ENCODE measurements at regions of chr6 and their contacts with region 1.

Region 1: GRCh38 chr6:90393232-90393884 is 96.7 kb upstream of the BACH2 start:
- DNase-seq: peak; percentile 92
- H3K4me3 Mint-ChIP-seq: no peak overlapping the region
- H3K27ac Mint-ChIP-seq: peak overlapping the region; percentile 70
- H3K4me1 Mint-ChIP-seq: peaks cover 78% of the 10 kb centered on the region
- H3K27me3 Mint-ChIP-seq: no peaks in the 10 kb centered on the region

Region 2: DNA sequence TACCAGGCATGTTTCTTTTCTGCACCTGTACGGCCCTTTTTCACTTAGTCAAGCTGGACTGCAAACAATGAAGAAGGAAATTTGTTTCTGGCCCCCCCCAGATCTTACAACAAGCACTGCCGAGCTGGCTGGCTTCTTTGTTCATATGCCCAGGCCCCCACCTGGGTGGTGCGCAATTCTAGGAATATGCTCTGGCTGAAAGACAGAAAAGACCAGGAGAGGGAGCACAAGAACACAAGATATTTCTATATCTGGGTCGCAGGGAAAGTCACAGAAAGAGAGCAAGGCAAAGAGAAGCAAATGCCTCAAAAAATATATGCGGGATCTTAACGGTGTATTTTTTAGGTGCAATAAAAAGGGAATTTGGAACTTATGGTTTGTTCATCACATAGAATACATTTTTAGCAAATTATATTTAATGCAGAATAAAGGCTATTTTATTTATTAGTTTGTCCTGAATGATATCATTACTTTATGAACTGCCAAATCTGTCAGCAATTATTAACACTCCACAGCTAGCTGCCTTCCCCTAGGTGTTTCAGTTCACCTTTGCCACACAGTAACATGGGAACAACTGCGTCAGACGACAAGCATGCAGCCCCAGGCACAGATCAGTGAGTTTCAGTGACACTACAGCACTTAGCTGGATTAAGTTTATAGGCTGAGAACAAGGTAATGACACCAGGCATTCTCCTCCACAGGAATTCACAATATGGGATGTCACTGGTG is 422.6 kb before region 1 on chr6:
- CTCF ChIA-PET with region 1: no interaction called
- intact Hi-C with region 1: loop called (anchors 1 kb)
- DNase-seq: peak; percentile 36
- H3K4me3 Mint-ChIP-seq: no peak overlapping the region
- H3K27ac Mint-ChIP-seq: no peak overlapping the region
- H3K4me1 Mint-ChIP-seq: peaks cover 54% of the 10 kb centered on the region
- H3K27me3 Mint-ChIP-seq: no peaks in the 10 kb centered on the region

Region 3: DNA sequence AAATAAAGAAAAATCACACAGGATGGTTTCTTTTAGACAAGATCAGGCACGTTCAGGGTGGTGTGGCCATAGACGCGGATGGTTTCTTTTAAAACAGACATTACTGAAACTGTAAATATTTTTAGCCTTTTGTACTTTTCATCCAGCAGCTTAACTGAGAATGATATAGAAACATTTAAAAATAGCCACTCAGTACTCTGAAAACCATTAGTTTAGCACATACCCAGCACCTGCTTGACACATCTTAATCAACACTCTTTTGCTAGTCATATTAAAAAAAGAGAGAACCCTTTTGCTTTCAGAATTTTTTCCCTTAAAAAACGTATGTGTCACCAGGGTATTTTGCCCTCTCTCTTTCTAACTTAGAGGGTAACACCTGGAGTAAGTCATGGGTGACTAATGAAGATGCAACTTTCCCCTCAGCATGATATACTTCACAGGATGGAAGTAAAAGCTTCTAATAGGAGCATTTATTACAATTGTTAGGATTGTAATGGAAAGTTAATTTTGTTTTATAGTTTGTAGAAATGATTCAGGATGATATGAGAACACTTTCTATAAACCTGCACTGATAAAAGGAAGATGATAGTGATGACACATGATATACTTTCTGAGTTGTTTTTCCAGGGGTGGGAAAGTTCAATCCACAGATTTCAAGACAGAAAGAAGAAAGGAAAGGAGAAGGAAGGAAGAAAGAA is 141.9 kb before region 1 on chr6:
- CTCF ChIA-PET with region 1: interaction called, 4 read pairs
- intact Hi-C with region 1: loop called (anchors 1 kb)
- DNase-seq: no peak
- H3K4me3 Mint-ChIP-seq: peak overlapping the region; percentile 8
- H3K27ac Mint-ChIP-seq: peak overlapping the region; percentile 98
- H3K4me1 Mint-ChIP-seq: peaks cover 90% of the 10 kb centered on the region
- H3K27me3 Mint-ChIP-seq: no peaks in the 10 kb centered on the region

Region 4: GRCh38 chr6:90263633-90264032 is 129.7 kb before region 1 on chr6:
- CTCF ChIA-PET with region 1: no interaction called
- intact Hi-C with region 1: no loop called
- DNase-seq: no peak
- H3K4me3 Mint-ChIP-seq: no peak overlapping the region
- H3K27ac Mint-ChIP-seq: peak overlapping the region; percentile 96
- H3K4me1 Mint-ChIP-seq: peaks cover 96% of the 10 kb centered on the region
- H3K27me3 Mint-ChIP-seq: no peaks in the 10 kb centered on the region

Region 5: GRCh38 chr6:90326404-90327057 is 66.8 kb before region 1 on chr6:
- CTCF ChIA-PET with region 1: interaction called, 4 read pairs
- intact Hi-C with region 1: loop called (anchors 1 kb)
- DNase-seq: peak; percentile 55
- H3K4me3 Mint-ChIP-seq: no peak overlapping the region
- H3K27ac Mint-ChIP-seq: peak overlapping the region; percentile 63
- H3K4me1 Mint-ChIP-seq: peaks cover 52% of the 10 kb centered on the region
- H3K27me3 Mint-ChIP-seq: no peaks in the 10 kb centered on the region

Region 6: GRCh38 chr6:90425161-90425641 is 31.8 kb after region 1 on chr6:
- CTCF ChIA-PET with region 1: interaction called, 10 read pairs
- intact Hi-C with region 1: loop called (anchors 1 kb)
- DNase-seq: peak; percentile 46
- H3K4me3 Mint-ChIP-seq: peak overlapping the region; percentile 48
- H3K27ac Mint-ChIP-seq: peak overlapping the region; percentile 92
- H3K4me1 Mint-ChIP-seq: peaks cover 41% of the 10 kb centered on the region
- H3K27me3 Mint-ChIP-seq: no peaks in the 10 kb centered on the region

Region 7: DNA sequence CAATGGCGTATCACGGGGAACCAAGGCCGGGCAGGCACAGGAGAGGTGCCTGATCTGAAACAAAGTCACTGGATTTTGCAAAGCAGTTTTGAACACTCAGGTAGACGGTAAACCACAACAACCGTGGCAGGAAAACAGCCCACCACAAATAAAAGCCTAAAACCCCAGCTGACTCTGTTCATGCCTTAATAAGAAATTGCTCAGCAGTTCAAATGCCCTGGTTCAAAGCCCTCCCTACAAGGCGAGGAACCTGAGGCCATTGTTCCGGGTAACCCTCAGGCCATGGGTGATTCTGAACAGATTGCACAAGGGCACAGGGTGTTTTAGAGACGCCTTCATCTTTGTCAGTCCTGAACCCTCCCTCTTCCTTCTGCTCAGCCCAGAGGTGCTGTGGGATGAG is 79.4 kb after region 1 on chr6:
- CTCF ChIA-PET with region 1: interaction called, 89 read pairs
- intact Hi-C with region 1: loop called (anchors 1 kb)
- DNase-seq: peak; percentile 61
- H3K4me3 Mint-ChIP-seq: peak overlapping the region; percentile 48
- H3K27ac Mint-ChIP-seq: peak overlapping the region; percentile 92
- H3K4me1 Mint-ChIP-seq: peaks cover 86% of the 10 kb centered on the region
- H3K27me3 Mint-ChIP-seq: no peaks in the 10 kb centered on the region

Measured in activated naive CD4-positive, alpha-beta T cell treated with anti-CD3 and anti-CD28 coated beads for 36 hours (primary cell).